CD4-positive, alpha-beta T cell (primary cell): ENCODE measurements at regions of chr5 and their contacts with region 1.

Region 1: DNA sequence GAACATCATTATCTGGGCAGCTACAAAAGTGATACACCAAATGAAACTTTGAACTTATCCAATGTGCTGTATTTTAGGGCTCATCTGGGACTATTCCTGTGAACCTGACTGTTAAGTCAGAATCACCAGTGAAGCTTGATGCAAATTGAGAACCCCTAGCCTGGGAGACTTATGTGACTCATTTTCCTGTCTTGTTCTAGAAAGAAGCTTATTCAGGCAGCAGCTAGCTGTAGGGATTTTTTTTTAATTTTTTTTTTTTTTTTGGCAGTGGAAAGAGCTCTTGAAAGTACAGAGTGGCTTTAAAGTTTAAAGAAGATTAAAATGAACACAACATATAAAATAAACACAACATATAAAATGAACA is 81.1 kb upstream of the TNFAIP8 start:
- DNase-seq: peak in 4 of 14 experiments; percentile 44 to 81 (median 70)
- ATAC-seq: peak; percentile 38
- H3K4me3 ChIP-seq: peak overlapping the region; percentile 69
- H3K4me3 Mint-ChIP-seq: peak overlapping the region; percentile 99
- H3K27ac ChIP-seq: peak overlapping the region; percentile 67 to 84
- H3K27ac Mint-ChIP-seq: peak overlapping the region; percentile 97
- H3K4me1 ChIP-seq: peaks cover 84% of the 10 kb centered on the region
- H3K4me1 Mint-ChIP-seq: peaks cover 96% of the 10 kb centered on the region
- H3K27me3 ChIP-seq: no peaks in the 10 kb centered on the region
- H3K27me3 Mint-ChIP-seq: peaks cover 6% of the 10 kb centered on the region
- CTCF ChIP-seq: no peak

Region 2: GRCh38 chr5:119290161-119290569 is 15.4 kb after region 1 on chr5:
- CTCF ChIA-PET with region 1: interaction called, 7 read pairs
- POLR2A ChIA-PET with region 1: interaction called, 30 read pairs
- intact Hi-C with region 1: loop called in 1 of 2 experiments (anchors 1 kb)
- DNase-seq: peak in 4 of 14 experiments; percentile 23 to 69 (median 66)
- ATAC-seq: peak; percentile 28
- H3K4me3 ChIP-seq: peak overlapping the region; percentile 28
- H3K4me3 Mint-ChIP-seq: peak overlapping the region; percentile 76
- H3K27ac ChIP-seq: peak overlapping the region; percentile 68 to 89
- H3K27ac Mint-ChIP-seq: peak overlapping the region; percentile 97
- H3K4me1 ChIP-seq: peaks cover 42% of the 10 kb centered on the region
- H3K4me1 Mint-ChIP-seq: peaks cover 83% of the 10 kb centered on the region
- H3K27me3 ChIP-seq: no peaks in the 10 kb centered on the region
- H3K27me3 Mint-ChIP-seq: no peaks in the 10 kb centered on the region
- CTCF ChIP-seq: no peak

Region 3: GRCh38 chr5:119309326-119309725 is 34.6 kb after region 1 on chr5:
- CTCF ChIA-PET with region 1: interaction called, 3 read pairs
- POLR2A ChIA-PET with region 1: interaction called, 116 read pairs
- intact Hi-C with region 1: loop called (anchors 2 kb)
- DNase-seq: peak in 3 of 14 experiments; percentile 23 to 52 (median 40)
- ATAC-seq: peak; percentile 39
- H3K4me3 ChIP-seq: peak overlapping the region; percentile 19
- H3K4me3 Mint-ChIP-seq: peak overlapping the region; percentile 82
- H3K27ac ChIP-seq: peak overlapping the region; percentile 63 to 71
- H3K27ac Mint-ChIP-seq: peak overlapping the region; percentile 95
- H3K4me1 ChIP-seq: peaks cover 70% of the 10 kb centered on the region
- H3K4me1 Mint-ChIP-seq: peaks cover 96% of the 10 kb centered on the region
- H3K27me3 ChIP-seq: no peaks in the 10 kb centered on the region
- H3K27me3 Mint-ChIP-seq: no peaks in the 10 kb centered on the region
- CTCF ChIP-seq: no peak